PC-9 (cell line): ENCODE measurements at regions of chr21 and their contacts with region 1.

Region 1: DNA sequence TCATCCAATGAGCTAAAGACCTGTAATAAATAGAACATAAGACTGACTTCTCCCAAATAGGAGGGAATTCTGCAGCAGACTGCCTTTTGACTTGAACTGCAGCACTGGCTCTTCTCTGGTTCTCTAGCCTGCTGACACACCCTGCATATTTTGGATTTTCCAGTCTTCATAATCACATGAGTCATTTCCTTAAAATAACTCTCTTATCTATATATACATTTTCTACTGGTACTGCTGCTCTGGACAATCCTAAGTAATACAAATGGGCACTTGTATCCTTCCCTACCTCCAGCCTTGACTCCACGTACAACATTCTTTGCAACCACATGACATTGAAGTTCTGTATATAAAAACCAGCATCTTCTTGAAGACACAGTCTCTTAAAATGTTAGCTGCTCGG is 429.4 kb upstream of the TMPRSS15 start:
- DNase-seq: peak; percentile 15 to 62
- H3K4me3 ChIP-seq: no peak overlapping the region
- H3K27ac ChIP-seq: no peak overlapping the region
- H3K4me1 ChIP-seq: peaks cover 11% of the 10 kb centered on the region; the same call in 1 of the 2 replicates
- H3K27me3 ChIP-seq: no peaks in the 10 kb centered on the region
- CTCF ChIP-seq: no peak

Region 2: GRCh38 chr21:18716575-18717138 is 116.3 kb before region 1 on chr21:
- CTCF ChIA-PET with region 1: no interaction called
- POLR2A ChIA-PET with region 1: no interaction called
- intact Hi-C with region 1: no loop called
- DNase-seq: no peak
- H3K4me3 ChIP-seq: no peak overlapping the region
- H3K27ac ChIP-seq: no peak overlapping the region
- H3K4me1 ChIP-seq: no peaks in the 10 kb centered on the region
- H3K27me3 ChIP-seq: no peaks in the 10 kb centered on the region
- CTCF ChIP-seq: no peak

Region 3: DNA sequence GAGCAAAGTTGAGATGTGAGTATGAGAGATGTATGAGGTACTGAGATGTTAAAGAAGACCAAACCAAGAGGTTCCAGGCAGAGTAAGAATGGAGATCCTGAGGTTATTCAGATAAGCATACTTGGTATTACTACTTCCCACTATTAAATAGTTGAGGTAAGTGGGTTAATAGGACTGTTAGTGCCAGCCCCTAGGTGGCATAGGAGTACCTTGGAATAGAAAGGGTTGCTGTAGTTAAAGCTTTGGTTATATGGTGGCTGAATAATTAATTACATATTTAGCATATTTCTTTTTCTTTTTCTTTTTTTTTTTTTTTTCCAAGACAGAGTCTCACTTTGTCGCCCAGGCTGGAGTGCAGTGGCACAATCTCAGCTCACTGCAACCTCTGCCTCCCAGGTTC is 31.5 kb before region 1 on chr21:
- CTCF ChIA-PET with region 1: interaction called, 10 read pairs
- POLR2A ChIA-PET with region 1: no interaction called
- intact Hi-C with region 1: no loop called
- DNase-seq: no peak
- H3K4me3 ChIP-seq: no peak overlapping the region
- H3K27ac ChIP-seq: no peak overlapping the region
- H3K4me1 ChIP-seq: no peaks in the 10 kb centered on the region
- H3K27me3 ChIP-seq: no peaks in the 10 kb centered on the region
- CTCF ChIP-seq: peak; percentile 41